Left colon (tissue), 2 donors: ENCODE measurements at regions of chr4 and their contacts with region 1.

Region 1: GRCh38 chr4:128663336-128663735 is 146.2 kb upstream of the JADE1 start:
- DNase-seq: peak; percentile 43 to 52
- ATAC-seq: peak; percentile 70

Region 2: DNA sequence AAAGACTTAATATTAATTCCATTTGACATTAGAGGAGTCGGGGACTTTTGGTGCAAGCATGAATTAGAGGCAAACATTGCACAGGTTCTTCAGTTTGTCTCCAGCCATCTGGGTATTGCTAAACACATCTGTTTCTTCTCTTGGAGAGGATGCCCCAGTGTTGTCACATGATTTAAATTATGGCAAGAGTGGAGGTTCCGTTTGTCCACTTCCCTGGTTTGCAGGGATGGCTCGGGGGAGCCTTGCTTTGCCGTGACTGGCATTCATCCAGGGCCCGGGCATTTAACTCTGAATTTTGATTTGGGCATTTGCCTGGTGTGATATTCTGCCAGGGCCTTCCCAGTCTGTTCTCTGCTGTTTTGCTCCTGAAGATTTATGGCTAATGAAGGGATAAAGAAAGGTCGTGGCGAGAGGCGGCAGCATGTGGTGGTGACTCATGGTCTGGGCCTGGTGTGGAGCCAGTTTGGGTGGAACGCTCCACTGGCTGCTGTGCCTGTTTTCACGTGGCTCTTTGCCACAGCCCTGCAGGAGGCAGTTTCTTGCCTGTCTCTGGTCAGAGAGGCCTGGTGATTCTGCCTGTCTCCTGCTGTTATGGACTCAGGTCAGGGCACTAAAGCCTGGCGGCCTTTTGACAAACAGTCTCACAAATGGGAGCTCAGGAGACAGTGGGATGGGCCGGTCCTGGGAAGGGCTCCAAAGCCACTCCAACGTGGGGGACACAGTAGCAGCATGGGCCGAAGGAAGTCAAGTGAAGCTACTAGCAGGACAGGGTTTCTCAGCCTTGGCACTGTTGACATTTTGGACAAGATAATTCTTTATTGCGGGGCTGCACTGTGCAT is 276.4 kb before region 1 on chr4:
- intact Hi-C with region 1: loop called in 1 of 2 experiments (anchors 5 kb)
- DNase-seq: peak; percentile 59 to 85
- ATAC-seq: peak; percentile 84

Region 3: DNA sequence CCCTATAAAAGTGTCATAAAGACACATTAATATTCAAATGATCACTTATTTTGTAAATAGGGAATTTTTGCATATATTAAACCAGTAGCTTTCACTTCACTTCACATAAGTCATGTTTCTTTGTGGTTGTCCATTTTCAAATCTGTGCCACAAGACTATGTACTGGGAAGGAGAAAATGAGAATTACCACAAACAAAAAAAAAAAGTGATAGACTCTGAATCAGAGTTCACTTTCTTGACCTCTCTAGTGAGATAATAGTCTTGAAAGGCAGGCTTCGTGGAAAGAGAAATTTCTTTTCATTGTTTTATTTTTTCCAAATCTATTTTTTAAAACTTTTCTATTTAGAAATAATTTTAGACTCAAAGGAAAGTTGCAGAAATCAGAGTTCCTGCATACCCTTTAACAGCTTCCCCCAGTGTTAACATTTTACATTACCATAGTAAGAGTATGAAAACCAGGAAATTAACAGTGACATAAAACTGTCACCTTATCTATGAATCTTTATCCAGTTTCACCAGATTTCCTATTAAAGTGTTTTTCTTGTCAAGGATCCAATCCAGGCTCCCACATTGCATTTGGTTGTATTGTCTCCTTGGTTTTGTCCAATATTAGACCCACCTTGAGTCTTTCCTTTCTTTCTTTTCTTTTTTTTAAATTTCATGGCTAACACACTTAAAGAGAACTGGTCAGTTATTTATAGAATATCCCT is 160.4 kb before region 1 on chr4:
- intact Hi-C with region 1: no loop called
- DNase-seq: no peak
- ATAC-seq: no peak

Region 4: GRCh38 chr4:128737098-128737513 is 73.8 kb after region 1 on chr4:
- intact Hi-C with region 1: no loop called
- DNase-seq: no peak
- ATAC-seq: no peak